Right cardiac atrium (tissue), 5 donors: ENCODE measurements at regions of chr6 and their contacts with region 1.

Region 1: GRCh38 chr6:68778356-68779020 is 143.4 kb downstream of the ADGRB3 start:
- DNase-seq: peak in 1 of 3 donors; percentile 13
- ATAC-seq: peak; percentile 84 to 87
- H3K4me3 ChIP-seq: no peak overlapping the region
- H3K27ac ChIP-seq: no peak overlapping the region
- H3K4me1 ChIP-seq: no peaks in the 10 kb centered on the region
- H3K27me3 ChIP-seq: no peaks in the 10 kb centered on the region

Region 2: DNA sequence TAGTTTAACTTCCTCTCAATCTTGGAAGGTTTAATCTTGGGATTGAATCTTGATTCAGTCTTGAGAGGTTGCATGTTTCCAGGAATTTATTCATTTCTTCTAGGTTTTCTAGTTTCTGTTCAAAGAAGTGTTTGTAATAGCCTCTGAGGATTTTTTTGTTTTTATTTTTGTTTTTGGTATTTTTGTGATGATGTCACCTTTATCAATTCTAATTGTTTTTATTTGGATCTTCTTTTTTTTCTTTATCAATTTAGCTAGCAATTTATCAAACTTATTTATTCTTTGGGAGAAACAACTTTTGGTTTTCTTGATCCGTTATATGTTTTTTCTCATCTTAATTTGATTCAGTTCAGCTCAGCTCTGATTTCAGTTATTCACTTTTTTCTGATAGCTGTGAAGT is 184.9 kb before region 1 on chr6:
- intact Hi-C with region 1: no loop called
- DNase-seq: no peak
- ATAC-seq: no peak
- H3K4me3 ChIP-seq: no peak overlapping the region
- H3K27ac ChIP-seq: no peak overlapping the region
- H3K4me1 ChIP-seq: no peaks in the 10 kb centered on the region
- H3K27me3 ChIP-seq: no peaks in the 10 kb centered on the region

Region 3: GRCh38 chr6:68634726-68635411 is 143.6 kb before region 1 on chr6 and contains the start of gene ADGRB3:
- intact Hi-C with region 1: loop called (anchors 5 to 10 kb)
- DNase-seq: peak; percentile 81 to 94 (median 93)
- ATAC-seq: peak; percentile 97
- H3K4me3 ChIP-seq: peak within 1 kb of the TSS; percentile 92
- H3K27ac ChIP-seq: peak within 1 kb of the TSS; percentile 75
- H3K4me1 ChIP-seq: no peaks in the 10 kb centered on the region
- H3K27me3 ChIP-seq: no peaks in the 10 kb centered on the region
- total RNA-seq, gene ADGRB3: 1.5 to 2.6 (median 1.5) TPM

Region 4: GRCh38 chr6:68639826-68640490 is 138.5 kb before region 1 on chr6:
- intact Hi-C with region 1: loop called (anchors 5 to 10 kb)
- DNase-seq: no peak
- ATAC-seq: peak in 1 of 2 donors; percentile 17
- H3K4me3 ChIP-seq: peak overlapping the region; percentile 58
- H3K27ac ChIP-seq: peak overlapping the region; percentile 43
- H3K4me1 ChIP-seq: no peaks in the 10 kb centered on the region
- H3K27me3 ChIP-seq: no peaks in the 10 kb centered on the region

Region 5: DNA sequence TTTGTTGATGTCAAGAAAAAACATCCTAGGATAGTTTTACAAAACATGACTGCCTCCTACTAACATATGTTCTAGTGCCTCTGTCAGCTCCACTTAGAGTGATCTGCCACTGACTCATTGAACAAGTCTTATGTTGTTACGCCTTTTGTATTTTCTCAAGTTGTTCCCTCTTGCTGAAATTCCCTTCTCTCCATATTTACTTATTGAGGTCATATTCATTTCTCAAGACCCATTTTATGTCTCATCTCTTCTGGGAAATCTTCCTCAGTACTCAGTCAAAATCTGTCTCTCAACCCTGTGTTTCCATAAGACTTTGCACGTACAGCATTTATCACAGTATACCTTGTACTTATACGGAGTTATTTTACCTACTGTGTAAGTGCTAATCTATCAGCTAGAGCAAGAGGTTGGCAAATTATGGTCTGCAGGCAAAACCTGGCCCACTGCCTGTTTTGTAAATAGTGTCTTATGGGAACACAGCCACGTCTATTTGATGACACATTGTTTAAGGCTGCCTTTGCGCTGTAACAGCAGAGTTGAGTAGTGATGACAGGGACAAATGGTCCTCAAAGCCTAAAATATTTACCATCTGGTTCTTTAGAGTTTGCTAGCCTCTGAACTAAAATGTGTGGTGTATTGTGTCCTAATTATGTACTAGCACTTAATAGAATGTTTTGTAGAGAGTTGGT is 60.0 kb before region 1 on chr6:
- intact Hi-C with region 1: loop called in 1 of 4 experiments (anchors 10 kb)
- DNase-seq: no peak
- ATAC-seq: peak; percentile 83 to 89
- H3K4me3 ChIP-seq: no peak overlapping the region
- H3K27ac ChIP-seq: peak overlapping the region; percentile 21
- H3K4me1 ChIP-seq: no peaks in the 10 kb centered on the region
- H3K27me3 ChIP-seq: no peaks in the 10 kb centered on the region

Region 6: GRCh38 chr6:68826501-68826900 is 48.0 kb after region 1 on chr6:
- intact Hi-C with region 1: no loop called
- DNase-seq: no peak
- ATAC-seq: no peak
- H3K4me3 ChIP-seq: no peak overlapping the region
- H3K27ac ChIP-seq: no peak overlapping the region
- H3K4me1 ChIP-seq: no peaks in the 10 kb centered on the region
- H3K27me3 ChIP-seq: no peaks in the 10 kb centered on the region